Activated CD4-positive, alpha-beta T cell treated with anti-CD3 and anti-CD28 coated beads for 36 hours (primary cell): ENCODE measurements at regions of chr6 and their contacts with region 1.

Region 1: DNA sequence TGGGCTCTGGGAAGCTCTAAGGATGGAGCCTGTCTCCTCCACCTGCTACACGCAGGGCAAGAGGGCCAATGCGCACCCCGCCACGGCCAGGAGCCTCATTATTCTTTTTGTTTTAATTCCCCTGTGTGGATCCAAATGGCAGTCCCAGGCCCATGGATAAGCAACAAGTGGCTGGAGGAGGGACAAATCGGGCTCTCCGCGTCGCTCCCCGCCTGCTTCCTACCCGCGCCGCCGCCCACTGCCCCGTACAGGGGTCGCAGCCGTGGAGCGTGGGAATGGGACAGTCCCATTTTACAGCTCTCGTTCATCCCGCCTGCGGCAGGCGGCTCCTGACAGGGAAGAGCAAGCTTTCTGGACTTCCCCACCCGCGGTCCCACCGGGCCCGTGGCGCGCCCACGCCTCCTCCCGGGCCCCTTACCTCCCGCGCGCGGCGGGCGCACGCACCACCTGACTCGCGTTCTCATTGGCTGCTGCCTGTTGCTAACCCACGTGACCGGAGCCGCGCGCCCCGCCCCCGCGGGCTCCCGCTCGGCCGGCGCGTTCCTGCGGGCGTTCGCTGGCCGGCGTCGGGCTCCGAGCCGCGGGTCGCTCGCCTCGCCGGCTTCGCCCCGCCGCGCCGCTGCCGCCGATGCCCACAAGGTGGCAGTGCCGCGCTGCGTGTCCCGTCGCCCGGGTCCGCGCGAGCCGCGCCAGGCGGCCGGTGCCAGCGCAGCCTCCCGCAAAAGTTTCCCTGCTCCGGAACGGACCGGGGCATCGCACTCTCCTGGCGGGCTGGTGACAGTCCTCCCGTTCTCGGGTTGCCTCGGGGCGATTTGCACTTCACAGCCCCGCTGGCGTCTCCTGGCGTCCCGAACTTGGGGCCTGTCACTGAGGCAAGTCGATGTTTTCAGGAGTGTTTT is 93.3 kb downstream of the CD83 start:
- DNase-seq: peak; percentile 94
- ATAC-seq: peak; percentile 89
- H3K4me3 Mint-ChIP-seq: peak overlapping the region; percentile 75
- H3K27ac Mint-ChIP-seq: peak overlapping the region; percentile 86
- H3K4me1 Mint-ChIP-seq: peaks cover 35% of the 10 kb centered on the region
- H3K27me3 Mint-ChIP-seq: no peaks in the 10 kb centered on the region

Region 2: DNA sequence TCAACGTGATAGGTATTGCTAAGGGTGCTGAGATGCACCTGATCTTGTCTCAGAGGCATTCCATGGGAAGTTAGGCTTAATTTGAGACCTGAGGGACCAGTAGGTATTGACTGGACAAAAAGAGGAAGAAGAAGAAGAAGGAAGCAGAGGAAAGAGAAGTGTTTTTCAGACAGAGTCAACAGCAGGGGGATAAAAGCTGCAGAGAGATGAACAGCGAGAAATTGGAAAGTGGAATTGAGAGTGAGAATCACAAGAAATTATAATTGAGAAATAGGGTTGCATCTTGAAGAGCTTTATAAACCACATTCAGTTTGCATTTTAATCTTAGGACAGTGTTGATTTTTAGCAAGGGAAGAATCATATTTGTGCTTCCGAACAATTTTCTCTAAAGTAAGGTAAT is 160.6 kb after region 1 on chr6:
- CTCF ChIA-PET with region 1: no interaction called
- POLR2A ChIA-PET with region 1: no interaction called
- intact Hi-C with region 1: no loop called
- DNase-seq: no peak
- ATAC-seq: peak; percentile 20
- H3K4me3 Mint-ChIP-seq: peak overlapping the region; percentile 24
- H3K27ac Mint-ChIP-seq: peak overlapping the region; percentile 37
- H3K4me1 Mint-ChIP-seq: peaks cover 40% of the 10 kb centered on the region
- H3K27me3 Mint-ChIP-seq: peaks cover 2% of the 10 kb centered on the region

Region 3: GRCh38 chr6:14452567-14453527 is 241.9 kb after region 1 on chr6:
- CTCF ChIA-PET with region 1: interaction called, 3 read pairs
- POLR2A ChIA-PET with region 1: interaction called, 3 read pairs
- intact Hi-C with region 1: loop called (anchors 1 to 10 kb)
- DNase-seq: peak; percentile 85
- ATAC-seq: peak; percentile 70
- H3K4me3 Mint-ChIP-seq: peak overlapping the region; percentile 26
- H3K27ac Mint-ChIP-seq: peak overlapping the region; percentile 83
- H3K4me1 Mint-ChIP-seq: peaks cover 89% of the 10 kb centered on the region
- H3K27me3 Mint-ChIP-seq: no peaks in the 10 kb centered on the region

Region 4: GRCh38 chr6:14665827-14666724 is 455.2 kb after region 1 on chr6:
- CTCF ChIA-PET with region 1: no interaction called
- POLR2A ChIA-PET with region 1: no interaction called
- intact Hi-C with region 1: loop called in 1 of 2 experiments (anchors 1 kb)
- DNase-seq: peak; percentile 81
- ATAC-seq: peak; percentile 79
- H3K4me3 Mint-ChIP-seq: no peak overlapping the region
- H3K27ac Mint-ChIP-seq: no peak overlapping the region
- H3K4me1 Mint-ChIP-seq: peaks cover 32% of the 10 kb centered on the region
- H3K27me3 Mint-ChIP-seq: no peaks in the 10 kb centered on the region

Region 5: DNA sequence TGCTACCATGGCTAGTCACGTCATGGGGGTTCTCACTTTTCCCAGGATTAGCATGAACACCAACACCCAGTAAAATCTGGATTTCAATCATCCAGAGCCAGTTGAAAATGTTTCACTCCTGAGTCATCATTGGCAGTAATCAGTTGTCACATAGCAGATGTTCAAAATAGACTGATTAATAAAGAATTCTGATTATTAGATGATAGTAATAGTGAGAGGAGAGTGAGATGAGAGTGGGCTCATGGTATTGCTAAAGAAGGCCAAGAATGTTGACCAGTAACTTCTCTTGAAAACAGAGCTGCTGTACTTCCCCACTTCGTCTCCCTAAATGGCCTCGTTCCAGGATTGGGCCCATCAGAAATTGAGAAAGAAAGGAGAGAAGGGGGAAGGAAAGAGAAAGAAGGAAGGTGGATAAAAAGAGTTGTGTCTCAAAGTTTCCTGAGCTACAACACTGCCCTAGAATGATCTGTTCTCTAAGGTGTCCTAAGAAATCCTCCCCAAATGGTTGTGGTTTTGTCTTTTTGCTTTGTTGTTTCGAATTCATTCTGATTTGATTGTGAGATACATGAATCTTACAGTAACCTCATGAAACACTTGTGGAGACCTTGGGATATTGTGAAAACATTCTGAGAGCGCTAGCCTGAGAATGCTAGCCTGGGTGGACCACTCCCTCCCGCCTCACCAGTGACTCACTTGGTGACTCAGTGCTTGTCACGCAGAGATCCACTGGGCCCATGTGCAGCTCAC is 532.7 kb after region 1 on chr6:
- CTCF ChIA-PET with region 1: no interaction called
- POLR2A ChIA-PET with region 1: no interaction called
- intact Hi-C with region 1: loop called in 1 of 2 experiments (anchors 5 kb)
- DNase-seq: peak; percentile 92
- ATAC-seq: peak; percentile 84
- H3K4me3 Mint-ChIP-seq: peak overlapping the region; percentile 65
- H3K27ac Mint-ChIP-seq: peak overlapping the region; percentile 100
- H3K4me1 Mint-ChIP-seq: peaks cover 92% of the 10 kb centered on the region
- H3K27me3 Mint-ChIP-seq: no peaks in the 10 kb centered on the region

Region 6: GRCh38 chr6:15184441-15184861 is 973.5 kb after region 1 on chr6:
- CTCF ChIA-PET with region 1: no interaction called
- POLR2A ChIA-PET with region 1: no interaction called
- intact Hi-C with region 1: loop called in 1 of 2 experiments (anchors 2 kb)
- DNase-seq: peak; percentile 62
- ATAC-seq: peak; percentile 98
- H3K4me3 Mint-ChIP-seq: peak overlapping the region; percentile 23
- H3K27ac Mint-ChIP-seq: peak overlapping the region; percentile 96
- H3K4me1 Mint-ChIP-seq: peaks cover 23% of the 10 kb centered on the region
- H3K27me3 Mint-ChIP-seq: no peaks in the 10 kb centered on the region

Region 7: DNA sequence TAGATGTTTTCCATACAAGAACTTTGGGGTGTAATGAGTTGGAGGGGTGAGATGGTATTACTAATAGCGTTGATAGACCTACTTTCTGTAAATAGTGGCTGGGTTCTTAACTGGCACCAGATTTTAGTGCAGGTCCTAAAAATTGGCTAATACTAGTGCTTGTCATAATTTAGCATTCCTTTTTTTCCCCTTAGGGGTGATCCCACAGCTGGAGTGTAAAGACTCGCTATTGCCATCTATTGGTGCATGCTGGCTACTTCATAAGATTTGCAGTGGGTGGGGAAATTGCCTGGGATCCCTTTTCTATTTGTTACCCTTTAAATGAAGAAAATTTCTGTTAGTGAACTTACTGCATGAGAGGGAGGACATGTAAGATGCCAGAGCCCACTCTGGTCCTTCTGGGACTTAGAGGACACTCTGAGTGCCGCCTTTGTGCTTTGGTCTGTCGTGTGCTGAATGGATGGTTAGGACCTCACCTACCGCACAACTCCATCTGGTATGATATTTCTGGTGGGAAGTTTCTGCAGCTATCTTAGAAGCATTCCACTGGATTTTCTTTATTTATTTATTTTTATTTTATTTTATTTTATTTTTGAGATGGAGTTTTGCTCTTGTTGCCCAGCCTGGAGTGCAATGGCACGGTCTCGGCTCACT is 1230.4 kb after region 1 on chr6:
- CTCF ChIA-PET with region 1: no interaction called
- POLR2A ChIA-PET with region 1: no interaction called
- intact Hi-C with region 1: loop called in 1 of 2 experiments (anchors 5 kb)
- DNase-seq: peak; percentile 49
- ATAC-seq: no peak
- H3K4me3 Mint-ChIP-seq: no peak overlapping the region
- H3K27ac Mint-ChIP-seq: no peak overlapping the region
- H3K4me1 Mint-ChIP-seq: peaks cover 73% of the 10 kb centered on the region
- H3K27me3 Mint-ChIP-seq: no peaks in the 10 kb centered on the region

Region 8: GRCh38 chr6:15628499-15629131 is 1417.7 kb after region 1 on chr6:
- CTCF ChIA-PET with region 1: interaction called, 3 read pairs
- POLR2A ChIA-PET with region 1: no interaction called
- intact Hi-C with region 1: loop called in 1 of 2 experiments (anchors 1 kb)
- DNase-seq: peak; percentile 80
- ATAC-seq: peak; percentile 96
- H3K4me3 Mint-ChIP-seq: no peak overlapping the region
- H3K27ac Mint-ChIP-seq: no peak overlapping the region
- H3K4me1 Mint-ChIP-seq: peaks cover 52% of the 10 kb centered on the region
- H3K27me3 Mint-ChIP-seq: peaks cover 8% of the 10 kb centered on the region